ENCODE measurements at regions of chr2 and their contacts with region 1.

Region 1: DNA sequence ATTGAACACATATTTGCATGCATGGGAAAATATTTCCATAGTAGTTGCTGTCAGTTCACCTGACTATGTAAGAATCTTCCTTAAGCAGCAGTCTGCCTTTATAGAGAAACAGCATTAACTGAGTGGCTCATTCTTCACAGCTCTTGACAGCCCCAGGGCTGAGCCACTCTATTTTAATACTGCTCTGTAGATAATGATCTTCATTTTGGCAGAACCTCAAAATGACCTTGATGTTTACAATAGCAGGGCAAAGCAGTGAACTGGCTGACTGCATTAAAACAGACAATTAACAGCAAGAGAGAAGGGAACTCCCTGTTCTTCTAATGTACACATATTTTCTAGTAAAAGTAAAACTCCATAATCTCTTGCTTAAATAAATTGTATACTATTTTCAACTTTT is 580.6 kb upstream of the SOX11 start:
- DNase-seq: no peak
- ATAC-seq: no peak
- H3K4me3 ChIP-seq: no peak overlapping the region
- H3K27ac ChIP-seq: no peak overlapping the region
- H3K4me1 ChIP-seq: no peaks in the 10 kb centered on the region
- H3K27me3 ChIP-seq: no peaks in the 10 kb centered on the region
- CTCF ChIP-seq: no peak
- POLR2A ChIP-seq: no peak
- RAD21 ChIP-seq: no peak

Region 2: DNA sequence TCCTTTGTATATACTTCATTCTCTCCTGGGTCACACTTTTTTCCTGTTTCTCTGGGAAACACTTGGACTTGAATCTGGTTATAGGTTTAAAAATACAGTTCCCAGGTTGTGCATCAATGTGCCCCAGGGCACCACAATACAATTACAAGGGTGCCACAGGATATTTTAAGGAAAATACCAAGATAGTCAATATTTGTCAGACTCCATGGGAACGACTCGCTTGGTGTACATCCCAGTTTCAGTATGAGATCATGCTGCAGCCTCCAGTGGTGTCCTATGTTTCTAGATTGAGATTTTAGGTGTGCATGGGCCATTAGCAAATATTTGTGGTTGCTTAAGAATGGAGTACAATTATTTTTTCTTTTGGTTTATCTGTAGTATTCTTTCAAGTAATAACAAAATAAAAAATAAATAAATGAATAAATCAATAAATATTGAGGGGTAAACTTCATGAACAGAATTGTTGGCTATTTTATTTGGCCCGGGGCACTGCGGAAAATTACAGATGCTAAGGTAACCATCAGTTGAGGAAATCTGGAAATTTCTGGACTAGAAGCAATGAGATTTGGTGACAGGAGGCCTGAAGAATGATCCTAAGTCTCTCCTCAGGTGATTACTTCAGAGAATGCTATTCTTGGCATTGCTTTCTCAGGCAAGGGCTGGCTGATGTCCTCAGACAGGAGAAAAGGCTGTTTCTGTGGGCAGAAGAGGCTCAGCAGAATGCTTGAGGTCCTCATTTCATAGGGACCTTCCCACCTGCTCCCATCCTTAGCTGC is 68.7 kb before region 1 on chr2:
- CTCF ChIA-PET with region 1: no interaction called
- POLR2A ChIA-PET with region 1: no interaction called
- RAD21 ChIA-PET with region 1: no interaction called
- intact Hi-C with region 1: no loop called
- DNase-seq: no peak
- ATAC-seq: no peak
- H3K4me3 ChIP-seq: no peak overlapping the region
- H3K27ac ChIP-seq: no peak overlapping the region
- H3K4me1 ChIP-seq: no peaks in the 10 kb centered on the region
- H3K27me3 ChIP-seq: no peaks in the 10 kb centered on the region
- CTCF ChIP-seq: no peak
- POLR2A ChIP-seq: no peak
- RAD21 ChIP-seq: no peak

Region 3: GRCh38 chr2:5125017-5125730 is 13.6 kb after region 1 on chr2:
- CTCF ChIA-PET with region 1: no interaction called
- POLR2A ChIA-PET with region 1: no interaction called
- RAD21 ChIA-PET with region 1: no interaction called
- intact Hi-C with region 1: loop called (anchors 1 kb)
- DNase-seq: no peak
- ATAC-seq: no peak
- H3K4me3 ChIP-seq: no peak overlapping the region
- H3K27ac ChIP-seq: no peak overlapping the region
- H3K4me1 ChIP-seq: no peaks in the 10 kb centered on the region
- H3K27me3 ChIP-seq: no peaks in the 10 kb centered on the region
- CTCF ChIP-seq: no peak
- POLR2A ChIP-seq: no peak
- RAD21 ChIP-seq: no peak

Region 4: DNA sequence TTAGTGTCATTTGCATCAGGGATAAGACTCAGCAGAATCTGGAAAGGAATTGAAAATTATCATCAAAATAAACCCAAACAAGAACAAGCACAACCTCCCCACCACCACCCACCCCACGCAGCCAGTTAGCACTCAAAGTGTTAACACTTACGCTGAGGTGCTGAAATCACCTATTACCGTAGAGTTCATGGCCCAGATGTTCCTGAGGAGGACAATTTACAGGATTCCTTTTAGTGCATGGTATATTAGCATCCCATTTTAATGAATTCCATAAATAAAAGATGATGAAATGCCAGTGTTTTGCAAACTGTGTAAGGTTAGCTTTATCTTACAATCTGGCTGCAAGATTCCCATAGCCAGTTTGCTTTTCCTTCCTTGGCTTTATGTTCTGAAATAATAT is 221.3 kb after region 1 on chr2:
- CTCF ChIA-PET with region 1: no interaction called
- POLR2A ChIA-PET with region 1: no interaction called
- RAD21 ChIA-PET with region 1: no interaction called
- intact Hi-C with region 1: no loop called
- DNase-seq: no peak
- ATAC-seq: no peak
- H3K4me3 ChIP-seq: no peak overlapping the region
- H3K27ac ChIP-seq: no peak overlapping the region
- H3K4me1 ChIP-seq: no peaks in the 10 kb centered on the region
- H3K27me3 ChIP-seq: no peaks in the 10 kb centered on the region
- CTCF ChIP-seq: no peak
- POLR2A ChIP-seq: no peak
- RAD21 ChIP-seq: no peak

Measured in HCT116 (cell line).